PC-9 (cell line): ENCODE measurements at regions of chr6 and their contacts with region 1.

Region 1: DNA sequence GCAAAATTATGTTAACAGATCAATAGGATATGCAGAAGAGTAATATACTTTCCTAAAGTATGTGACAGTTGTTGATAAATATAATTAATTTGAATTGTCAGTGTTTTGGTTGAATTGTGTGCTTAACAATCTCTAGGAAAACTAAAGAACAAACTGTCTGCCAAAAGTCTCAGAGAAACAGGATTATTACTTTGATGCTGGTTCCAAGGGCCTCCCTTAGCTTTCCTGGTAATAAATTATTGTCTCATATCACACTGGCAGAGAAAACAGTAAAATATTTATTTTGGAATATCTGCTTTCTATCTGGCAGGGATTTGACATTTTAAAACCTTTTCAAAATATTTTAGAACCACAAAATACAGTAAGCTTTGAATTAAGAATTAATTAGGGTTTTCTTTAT is 40.1 kb upstream of the CARMIL1 start:
- DNase-seq: no peak
- H3K4me3 ChIP-seq: no peak overlapping the region
- H3K27ac ChIP-seq: no peak overlapping the region
- H3K4me1 ChIP-seq: no peaks in the 10 kb centered on the region
- H3K27me3 ChIP-seq: no peaks in the 10 kb centered on the region
- CTCF ChIP-seq: no peak

Region 2: GRCh38 chr6:25324066-25324762 is 85.2 kb after region 1 on chr6:
- CTCF ChIA-PET with region 1: no interaction called
- POLR2A ChIA-PET with region 1: no interaction called
- intact Hi-C with region 1: no loop called
- DNase-seq: no peak
- H3K4me3 ChIP-seq: no peak overlapping the region
- H3K27ac ChIP-seq: no peak overlapping the region
- H3K4me1 ChIP-seq: 0 out of 2 replicates have a peak, but pooled peaks cover 9% of the 10 kb centered on the region
- H3K27me3 ChIP-seq: no peaks in the 10 kb centered on the region
- CTCF ChIP-seq: no peak

Region 3: DNA sequence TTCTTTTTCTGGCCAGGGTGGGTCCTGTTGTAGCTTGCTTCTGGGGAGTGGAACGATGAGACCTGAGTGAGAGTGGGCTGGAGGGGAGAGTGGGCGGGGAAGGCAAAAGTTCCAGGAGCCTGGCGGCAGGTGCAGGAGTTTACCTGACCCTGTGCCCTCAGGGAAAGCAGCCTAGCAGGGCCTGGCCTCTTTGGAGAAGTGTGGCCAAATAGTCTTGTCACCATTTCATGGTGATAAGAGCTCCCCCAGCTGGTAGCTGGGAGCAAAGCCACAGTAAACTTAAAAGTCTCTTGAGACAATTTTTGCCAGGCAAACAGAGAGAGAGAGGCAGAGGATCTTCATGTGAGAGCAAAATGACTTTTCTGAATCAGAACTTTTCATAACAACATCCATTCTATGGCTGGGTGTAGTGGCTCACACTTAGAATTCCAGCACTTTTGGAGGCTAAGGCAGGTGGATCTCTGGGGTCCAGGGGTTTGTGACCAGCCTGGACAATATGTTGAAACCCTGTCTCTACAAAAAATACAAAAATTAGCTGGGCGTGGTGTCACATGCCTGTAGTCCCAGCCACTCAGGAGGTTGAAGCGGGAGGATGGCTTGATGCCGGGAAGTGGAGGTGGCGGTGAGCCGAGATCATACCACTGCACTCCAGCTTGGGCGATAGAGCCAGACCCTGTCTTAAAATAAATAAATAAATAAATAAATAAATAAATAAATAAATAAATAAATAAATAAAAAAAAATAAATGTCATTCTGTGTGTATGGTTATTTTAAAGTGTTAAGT is 251.2 kb after region 1 on chr6:
- CTCF ChIA-PET with region 1: no interaction called
- POLR2A ChIA-PET with region 1: interaction called, 18 read pairs
- intact Hi-C with region 1: no loop called
- DNase-seq: peak; percentile 68 to 73
- H3K4me3 ChIP-seq: no peak overlapping the region
- H3K27ac ChIP-seq: no peak overlapping the region
- H3K4me1 ChIP-seq: peaks cover 4% of the 10 kb centered on the region
- H3K27me3 ChIP-seq: no peaks in the 10 kb centered on the region
- CTCF ChIP-seq: peak; percentile 85